ENCODE measurements at regions of chr1 and their contacts with region 1.

Region 1: DNA sequence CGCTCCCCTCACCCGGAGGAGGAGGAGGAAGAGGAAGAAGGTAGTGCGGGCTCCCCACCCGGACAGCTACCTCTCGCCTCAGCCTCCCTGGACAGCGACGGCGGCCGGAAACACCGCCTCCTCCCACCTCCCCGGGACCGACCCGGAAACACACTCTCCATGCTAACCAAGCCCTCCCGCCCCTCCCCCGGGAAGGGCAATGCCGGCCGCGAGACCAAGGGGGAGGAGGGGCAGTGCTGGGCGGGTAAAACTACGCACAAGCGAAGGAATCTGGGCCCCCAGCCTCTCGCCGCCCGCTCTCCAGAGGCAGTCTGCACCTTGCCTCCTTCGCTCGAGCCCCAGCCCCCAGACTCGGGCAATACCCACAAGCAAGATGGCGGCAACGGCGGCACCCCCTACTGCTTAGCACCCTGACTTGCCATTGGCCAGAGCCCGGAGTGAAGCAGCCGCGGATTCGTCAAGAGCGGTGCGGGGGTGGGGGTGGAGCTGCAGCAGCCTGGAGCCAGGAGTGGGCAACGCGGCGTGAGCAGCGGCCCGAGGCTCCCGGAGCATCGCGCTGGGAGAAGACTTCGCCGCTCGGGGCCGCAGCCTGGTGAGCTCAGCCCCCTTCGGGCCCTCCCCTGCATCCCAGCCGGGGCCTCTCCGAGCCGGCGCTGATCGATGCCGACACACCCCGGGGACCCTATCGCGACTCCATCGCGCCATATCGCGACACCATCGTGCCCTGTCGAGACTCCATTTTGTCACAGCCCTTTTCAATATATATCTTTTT is at the starts of genes KIAA0319L and NCDN:
- DNase-seq: peak; percentile 97
- H3K4me3 Mint-ChIP-seq: peak within 1 kb of the TSS; percentile 94
- H3K27ac Mint-ChIP-seq: peak within 1 kb of the TSS; percentile 93
- H3K4me1 Mint-ChIP-seq: peaks cover 50% of the 10 kb centered on the region
- H3K27me3 Mint-ChIP-seq: no peaks in the 10 kb centered on the region
- CTCF ChIP-seq: no peak
- total RNA-seq, gene KIAA0319L: 50.7 and 56.8 TPM in 2 replicates
- total RNA-seq, gene NCDN: 31.4 and 31.5 TPM in 2 replicates

Region 2: GRCh38 chr1:35443768-35444518 is 113.5 kb before region 1 on chr1:
- CTCF ChIA-PET with region 1: interaction called, 53 read pairs
- POLR2A ChIA-PET with region 1: interaction called, 212 read pairs
- intact Hi-C with region 1: loop called (anchors 2 kb)
- DNase-seq: no peak
- H3K4me3 Mint-ChIP-seq: no peak overlapping the region
- H3K27ac Mint-ChIP-seq: no peak overlapping the region
- H3K4me1 Mint-ChIP-seq: peaks cover 8% of the 10 kb centered on the region
- H3K27me3 Mint-ChIP-seq: no peaks in the 10 kb centered on the region
- CTCF ChIP-seq: no peak

Region 3: DNA sequence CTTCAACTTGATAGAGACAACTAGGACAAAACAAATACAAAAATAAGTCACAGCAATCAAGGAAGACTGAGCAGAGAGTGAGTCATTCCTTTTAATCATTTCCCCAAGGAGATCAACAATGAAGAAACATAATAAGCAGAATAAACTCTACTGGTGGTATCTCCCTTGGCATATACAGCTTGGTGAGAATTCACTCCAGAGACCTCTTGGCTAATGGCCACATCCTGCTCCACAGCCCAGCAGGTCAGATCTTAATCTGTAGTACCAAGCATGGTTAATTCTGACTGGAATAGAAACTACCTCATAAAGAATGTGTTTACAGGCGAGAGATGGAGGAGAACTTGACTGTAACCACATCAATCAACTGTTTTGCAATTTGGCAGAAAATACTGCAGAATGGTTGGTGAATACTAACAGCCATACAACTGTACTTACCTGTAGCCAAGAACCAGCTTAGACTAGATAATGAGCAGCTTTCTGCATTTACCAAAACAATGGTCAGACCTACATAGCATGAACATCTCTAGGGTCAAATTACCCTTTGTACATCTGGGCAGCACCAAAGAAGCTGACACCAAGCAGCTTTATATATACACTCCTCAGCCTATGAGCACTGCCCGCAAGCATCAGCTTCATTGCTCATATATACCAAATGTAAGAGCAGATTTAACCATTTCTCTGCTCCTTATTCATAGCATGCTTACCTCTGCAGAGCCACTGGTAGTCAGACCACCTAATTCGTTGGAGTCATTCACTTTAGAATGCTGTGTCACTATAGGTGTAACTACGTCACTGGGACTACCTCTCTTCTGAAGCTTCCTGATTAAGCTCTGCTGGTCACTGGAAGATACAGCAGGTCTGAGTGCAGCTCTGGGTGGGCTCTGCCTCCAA is 51.3 kb before region 1 on chr1:
- CTCF ChIA-PET with region 1: interaction called, 5 read pairs
- POLR2A ChIA-PET with region 1: interaction called, 14 read pairs
- intact Hi-C with region 1: no loop called
- DNase-seq: peak; percentile 76
- H3K4me3 Mint-ChIP-seq: no peak overlapping the region
- H3K27ac Mint-ChIP-seq: peak overlapping the region; percentile 25
- H3K4me1 Mint-ChIP-seq: peaks cover 18% of the 10 kb centered on the region
- H3K27me3 Mint-ChIP-seq: no peaks in the 10 kb centered on the region
- CTCF ChIP-seq: no peak

Region 4: DNA sequence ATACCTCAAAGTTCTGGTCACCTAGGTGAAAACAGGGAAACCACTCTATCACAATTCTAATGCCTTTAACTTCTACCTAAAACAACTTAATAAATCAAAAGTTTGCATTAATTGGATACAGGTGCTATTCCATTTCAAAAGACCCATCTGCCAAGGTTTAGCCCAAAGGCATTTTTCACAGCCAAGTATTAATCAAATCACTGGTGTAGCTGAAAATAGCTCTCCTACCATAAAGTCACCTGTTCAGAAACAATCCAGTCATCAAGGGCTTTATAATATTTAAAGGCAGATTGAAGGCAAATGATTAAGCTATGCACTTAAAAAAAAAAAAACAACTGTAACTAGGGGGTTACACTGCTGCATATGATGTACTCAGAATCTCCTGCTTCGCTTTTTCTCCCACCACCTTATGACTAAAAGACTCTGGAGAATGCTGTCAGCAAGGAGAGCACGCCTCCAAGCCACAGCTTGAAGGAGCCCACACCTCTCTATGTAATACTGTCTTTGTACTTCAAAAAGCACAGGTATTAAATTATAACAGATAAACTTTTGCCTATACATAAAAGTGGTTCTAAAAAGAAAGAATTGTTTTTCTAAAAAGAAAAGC is 20.8 kb before region 1 on chr1:
- CTCF ChIA-PET with region 1: interaction called, 4 read pairs
- POLR2A ChIA-PET with region 1: interaction called, 15 read pairs
- intact Hi-C with region 1: no loop called
- DNase-seq: no peak
- H3K4me3 Mint-ChIP-seq: no peak overlapping the region
- H3K27ac Mint-ChIP-seq: no peak overlapping the region
- H3K4me1 Mint-ChIP-seq: peaks cover 18% of the 10 kb centered on the region
- H3K27me3 Mint-ChIP-seq: no peaks in the 10 kb centered on the region
- CTCF ChIP-seq: no peak

Region 5: DNA sequence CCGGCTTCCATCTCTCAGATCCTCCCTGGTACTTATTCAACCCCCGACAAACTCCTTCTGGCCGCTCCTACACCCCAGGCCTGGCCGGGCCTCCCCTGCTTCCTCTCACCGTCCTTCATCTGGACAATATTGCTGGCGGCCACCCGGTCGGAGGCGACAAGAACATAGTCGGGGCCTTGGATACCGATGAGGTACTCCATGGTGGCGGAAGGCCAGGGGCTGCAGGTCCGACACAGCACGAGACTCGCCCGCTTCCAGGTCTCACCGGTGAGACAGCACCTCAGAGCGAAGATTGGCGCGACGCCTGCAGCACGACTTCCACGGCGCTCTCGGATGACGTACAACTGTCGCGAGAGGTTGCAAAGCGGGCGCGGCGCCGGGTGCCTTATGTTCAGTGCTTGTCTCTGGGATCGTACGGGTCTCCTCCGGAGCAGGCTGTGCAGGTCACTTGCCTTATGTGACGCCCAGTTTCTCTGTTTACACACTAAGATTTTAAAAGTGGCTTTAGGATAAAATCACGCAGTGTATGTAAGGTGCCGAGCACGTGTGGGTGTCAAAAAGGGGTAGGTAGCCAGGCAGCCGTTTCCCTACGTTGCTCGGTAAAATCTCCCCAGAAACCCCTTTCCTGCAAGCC is 83.9 kb after region 1 on chr1 and contains the start of gene PSMB2:
- CTCF ChIA-PET with region 1: no interaction called
- POLR2A ChIA-PET with region 1: interaction called, 20 read pairs
- intact Hi-C with region 1: no loop called
- DNase-seq: peak; percentile 96
- H3K4me3 Mint-ChIP-seq: peak within 1 kb of the TSS; percentile 99
- H3K27ac Mint-ChIP-seq: peak within 1 kb of the TSS; percentile 100
- H3K4me1 Mint-ChIP-seq: peaks cover 7% of the 10 kb centered on the region
- H3K27me3 Mint-ChIP-seq: peaks cover 12% of the 10 kb centered on the region
- CTCF ChIP-seq: no peak
- total RNA-seq, gene PSMB2: 82.6 and 93.9 TPM in 2 replicates

Region 6: DNA sequence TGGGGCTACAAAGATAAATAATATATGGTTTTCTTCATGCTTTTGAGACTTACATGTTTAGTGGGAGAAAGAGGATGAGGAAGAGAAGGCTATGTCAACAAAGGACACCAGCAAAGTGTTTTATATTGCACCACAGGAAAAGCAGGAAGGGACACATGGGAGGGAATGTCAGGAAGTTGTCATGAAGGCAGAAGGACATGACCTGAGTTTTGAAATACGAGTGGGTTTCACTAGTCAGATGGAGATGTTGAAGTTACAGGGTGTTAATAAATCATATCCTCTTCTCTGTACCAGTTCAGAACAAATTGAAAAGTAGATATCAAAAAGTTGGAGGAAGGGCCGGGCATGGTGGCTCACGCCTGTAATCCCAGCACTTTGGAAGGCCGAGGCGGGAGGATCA is 307.3 kb after region 1 on chr1:
- CTCF ChIA-PET with region 1: no interaction called
- POLR2A ChIA-PET with region 1: no interaction called
- intact Hi-C with region 1: no loop called
- DNase-seq: no peak
- H3K4me3 Mint-ChIP-seq: no peak overlapping the region
- H3K27ac Mint-ChIP-seq: no peak overlapping the region
- H3K4me1 Mint-ChIP-seq: no peaks in the 10 kb centered on the region
- H3K27me3 Mint-ChIP-seq: no peaks in the 10 kb centered on the region
- CTCF ChIP-seq: no peak

Measured in MCF 10A (cell line).